K562 (cell line): ENCODE measurements at regions of chr15 and their contacts with region 1.

Region 1: GRCh38 chr15:64842986-64843561 is 1.4 kb downstream of the PLEKHO2 start:
- DNase-seq: peak in 2 of 4 experiments; percentile 60 to 74
- ATAC-seq: peak; percentile 52
- H3K4me3 ChIP-seq: peak overlapping the region; percentile 83
- H3K27ac ChIP-seq: peak overlapping the region; percentile 81; the same call in 2 of the 3 replicates
- H3K4me1 ChIP-seq: peaks cover 38 to 39% of the 10 kb centered on the region in 2 experiments
- H3K27me3 ChIP-seq: no peaks in the 10 kb centered on the region
- CTCF ChIP-seq: peak in 2 of 3 experiments; percentile 1 to 3; a peak in 1 of 6 replicates
- EP300 ChIP-seq: no peak
- POLR2A ChIP-seq: no peak
- RAD21 ChIP-seq: no peak

Region 2: GRCh38 chr15:64856429-64857145 is 13.5 kb after region 1 on chr15:
- CTCF ChIA-PET with region 1: no interaction called
- POLR2A ChIA-PET with region 1: interaction called, 10 read pairs
- in situ Hi-C with region 1: no loop called
- intact Hi-C with region 1: no loop called
- DNase-seq: no peak
- ATAC-seq: peak; percentile 29; the same call in 1 of the 3 replicates
- H3K4me3 ChIP-seq: no peak overlapping the region
- H3K27ac ChIP-seq: no peak overlapping the region
- H3K4me1 ChIP-seq: peaks cover 0 to 9% of the 10 kb centered on the region in 2 experiments; a peak in 2 of 5 replicates
- H3K27me3 ChIP-seq: no peaks in the 10 kb centered on the region
- CTCF ChIP-seq: no peak
- EP300 ChIP-seq: no peak
- POLR2A ChIP-seq: no peak
- RAD21 ChIP-seq: 0 out of 4 replicates have a peak, but pooled peaks of 1 of the 2 experiments have one; percentile 2

Region 3: DNA sequence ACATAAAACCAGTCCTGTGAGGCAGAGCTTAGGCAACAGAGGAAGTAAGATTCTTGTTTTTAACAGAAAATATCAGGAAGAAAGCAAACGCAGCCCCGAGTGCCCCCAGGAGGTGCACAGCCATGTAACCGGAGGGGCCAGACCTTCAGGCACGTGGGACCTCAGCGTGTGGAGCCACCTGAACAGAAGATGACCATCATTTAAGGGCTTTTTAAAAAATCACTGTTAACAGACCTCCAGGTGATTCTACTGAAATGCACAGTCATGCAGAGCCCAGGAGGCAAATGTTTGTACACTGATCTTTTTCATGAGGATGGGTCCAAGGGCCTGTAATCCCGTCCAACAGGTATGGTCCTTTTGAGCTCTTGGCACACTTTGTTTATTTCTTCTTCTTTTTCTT is 107.8 kb after region 1 on chr15:
- CTCF ChIA-PET with region 1: no interaction called
- POLR2A ChIA-PET with region 1: no interaction called
- in situ Hi-C with region 1: no loop called
- intact Hi-C with region 1: no loop called
- DNase-seq: no peak
- ATAC-seq: peak; percentile 63
- H3K4me3 ChIP-seq: no peak overlapping the region
- H3K27ac ChIP-seq: no peak overlapping the region
- H3K4me1 ChIP-seq: no peaks in the 10 kb centered on the region
- H3K27me3 ChIP-seq: peaks cover 2 to 5% of the 10 kb centered on the region in 2 experiments; a peak in 1 of 5 replicates
- CTCF ChIP-seq: no peak
- EP300 ChIP-seq: no peak
- POLR2A ChIP-seq: no peak
- RAD21 ChIP-seq: no peak